ENCODE measurements at regions of chr4 and their contacts with region 1.

Region 1: DNA sequence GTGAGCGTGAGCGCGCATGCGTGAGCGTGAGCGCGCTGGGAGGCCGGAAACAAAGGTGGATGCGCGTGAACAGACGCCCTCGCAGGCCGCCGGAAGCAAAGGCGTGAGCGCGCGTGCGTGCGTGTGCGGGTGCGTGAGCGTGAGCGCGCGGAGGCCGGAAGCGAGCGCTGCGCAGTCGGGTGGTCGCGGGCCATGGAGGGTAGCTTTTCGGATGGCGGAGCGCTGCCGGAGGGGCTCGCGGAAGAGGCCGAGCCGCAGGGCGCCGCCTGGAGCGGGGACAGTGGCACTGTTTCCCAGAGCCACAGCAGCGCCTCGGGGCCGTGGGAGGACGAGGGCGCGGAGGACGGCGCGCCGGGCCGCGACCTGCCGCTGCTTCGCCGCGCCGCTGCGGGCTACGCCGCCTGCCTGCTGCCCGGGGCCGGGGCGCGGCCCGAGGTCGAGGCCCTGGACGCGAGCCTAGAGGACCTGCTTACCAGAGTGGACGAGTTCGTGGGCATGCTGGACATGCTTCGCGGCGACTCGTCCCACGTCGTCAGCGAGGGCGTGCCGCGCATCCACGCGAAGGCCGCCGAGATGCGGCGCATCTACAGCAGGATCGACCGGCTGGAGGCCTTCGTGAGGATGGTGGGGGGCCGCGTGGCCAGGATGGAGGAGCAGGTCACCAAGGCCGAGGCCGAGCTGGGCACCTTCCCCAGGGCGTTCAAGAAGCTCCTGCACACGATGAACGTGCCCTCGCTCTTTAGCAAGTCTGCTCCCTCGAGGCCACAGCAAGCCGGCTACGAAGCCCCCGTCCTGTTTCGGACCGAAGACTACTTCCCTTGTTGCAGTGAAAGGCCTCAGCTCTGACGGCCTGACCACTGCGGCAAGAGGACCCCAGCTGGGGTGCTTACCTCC is at the start of gene BLOC1S4:
- DNase-seq: peak; percentile 81
- ATAC-seq: peak; percentile 82
- H3K4me3 ChIP-seq: peak within 1 kb of the TSS; percentile 79 to 83
- H3K27ac ChIP-seq: peak within 1 kb of the TSS; percentile 93
- H3K4me1 ChIP-seq: peaks cover 4 to 20% of the 10 kb centered on the region in 2 experiments; a peak in 3 of 4 replicates
- H3K27me3 ChIP-seq: no peaks in the 10 kb centered on the region
- CTCF ChIP-seq: no peak
- POLR2A ChIP-seq: peak; percentile 32
- RAD21 ChIP-seq: no peak
- total RNA-seq, gene BLOC1S4: 15.7 TPM

Region 2: GRCh38 chr4:6427439-6428090 is 288.7 kb before region 1 on chr4:
- CTCF ChIA-PET with region 1: no interaction called
- POLR2A ChIA-PET with region 1: no interaction called
- RAD21 ChIA-PET with region 1: no interaction called
- intact Hi-C with region 1: no loop called
- DNase-seq: no peak
- ATAC-seq: peak; percentile 50; the same call in 1 of the 2 replicates
- H3K4me3 ChIP-seq: no peak overlapping the region
- H3K27ac ChIP-seq: no peak overlapping the region
- H3K4me1 ChIP-seq: no peaks in the 10 kb centered on the region
- H3K27me3 ChIP-seq: no peaks in the 10 kb centered on the region
- CTCF ChIP-seq: 0 out of 6 replicates have a peak, but pooled peaks of 1 of the 3 experiments have one; percentile 2
- POLR2A ChIP-seq: no peak
- RAD21 ChIP-seq: peak; percentile 47

Region 3: DNA sequence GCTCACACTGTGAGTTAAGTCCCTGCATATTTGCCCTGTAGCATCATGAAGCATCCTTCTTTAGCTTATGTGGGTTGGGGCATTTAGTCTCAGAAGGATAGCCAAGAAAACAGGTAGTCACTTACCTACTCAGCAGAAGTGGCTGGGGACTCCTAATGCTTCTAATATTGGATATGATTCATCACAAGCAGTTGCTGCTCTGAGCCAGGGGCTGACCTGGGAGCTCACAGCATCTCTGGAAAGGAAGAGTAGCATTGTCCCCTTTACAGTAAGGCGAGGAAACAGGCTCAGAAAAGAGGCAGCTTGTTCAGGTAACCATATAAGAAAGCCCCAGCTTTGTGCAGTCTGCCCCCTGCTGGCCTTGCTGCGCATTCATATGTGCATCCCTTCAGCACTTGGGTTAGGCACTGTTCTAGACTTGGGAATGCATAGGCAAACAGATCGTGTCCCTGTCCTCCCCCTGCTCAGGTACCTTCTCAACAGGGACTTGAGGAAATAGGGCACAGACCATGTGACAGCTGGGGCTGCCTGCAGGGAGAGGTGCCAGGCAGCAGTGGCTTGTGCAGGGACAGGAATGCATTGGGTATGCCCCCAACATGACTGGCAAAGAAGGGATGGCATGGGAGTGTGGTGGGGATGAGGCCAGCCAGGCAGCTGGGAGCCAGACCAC is 157.7 kb after region 1 on chr4:
- CTCF ChIA-PET with region 1: interaction called, 92 read pairs
- POLR2A ChIA-PET with region 1: no interaction called
- RAD21 ChIA-PET with region 1: interaction called, 11 to 15 read pairs
- intact Hi-C with region 1: loop called (anchors 1 kb)
- DNase-seq: peak; percentile 51
- ATAC-seq: peak; percentile 91
- H3K4me3 ChIP-seq: no peak overlapping the region
- H3K27ac ChIP-seq: no peak overlapping the region
- H3K4me1 ChIP-seq: no peaks in the 10 kb centered on the region
- H3K27me3 ChIP-seq: no peaks in the 10 kb centered on the region
- CTCF ChIP-seq: peak; percentile 78 to 92 (median 86)
- POLR2A ChIP-seq: no peak
- RAD21 ChIP-seq: peak; percentile 82

Region 4: DNA sequence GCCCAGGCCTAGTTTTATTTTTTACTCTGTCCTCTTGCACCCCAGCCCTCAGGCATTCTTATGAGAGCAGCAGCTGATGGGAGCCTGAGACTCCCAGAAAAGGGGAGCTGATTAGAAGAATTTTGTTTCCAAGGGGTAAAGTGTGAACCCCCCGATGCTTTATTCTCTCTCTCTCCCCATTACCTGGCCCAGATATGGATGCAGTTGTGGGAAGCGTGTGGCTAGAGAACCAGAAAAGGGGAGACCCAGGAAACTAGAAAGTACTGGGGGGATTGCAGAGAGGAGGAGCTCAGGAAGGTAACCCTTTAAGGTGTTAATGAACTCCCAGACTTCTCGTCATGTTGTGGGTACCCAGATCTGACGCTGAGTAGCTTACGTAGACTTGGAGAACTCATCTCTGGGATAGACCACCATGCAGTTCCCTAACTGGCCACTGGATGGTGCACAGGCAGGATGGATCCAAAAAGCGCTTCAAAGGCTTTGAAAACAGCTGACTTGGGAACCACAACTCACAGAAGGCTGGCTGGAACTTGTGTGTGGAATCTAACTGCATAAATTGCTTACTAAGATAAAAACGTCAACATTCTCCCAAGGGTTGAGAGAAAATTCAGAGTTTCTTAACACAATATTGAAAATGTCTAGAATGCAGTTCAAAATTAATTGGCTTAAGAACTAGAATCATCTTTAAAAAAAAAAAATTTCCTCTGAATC is 258.0 kb after region 1 on chr4:
- CTCF ChIA-PET with region 1: no interaction called
- POLR2A ChIA-PET with region 1: no interaction called
- RAD21 ChIA-PET with region 1: no interaction called
- intact Hi-C with region 1: loop called (anchors 10 kb)
- DNase-seq: peak; percentile 70
- ATAC-seq: peak; percentile 90
- H3K4me3 ChIP-seq: no peak overlapping the region
- H3K27ac ChIP-seq: no peak overlapping the region
- H3K4me1 ChIP-seq: peaks cover 3% of the 10 kb centered on the region in 2 experiments; a peak in 1 of 4 replicates
- H3K27me3 ChIP-seq: no peaks in the 10 kb centered on the region
- CTCF ChIP-seq: peak; percentile 75 to 98 (median 87)
- POLR2A ChIP-seq: no peak
- RAD21 ChIP-seq: peak; percentile 79

Region 5: GRCh38 chr4:7081891-7082471 is 365.7 kb after region 1 on chr4:
- CTCF ChIA-PET with region 1: interaction called, 13 read pairs
- POLR2A ChIA-PET with region 1: no interaction called
- RAD21 ChIA-PET with region 1: no interaction called
- intact Hi-C with region 1: no loop called
- DNase-seq: peak; percentile 74
- ATAC-seq: peak; percentile 100
- H3K4me3 ChIP-seq: no peak overlapping the region
- H3K27ac ChIP-seq: no peak overlapping the region
- H3K4me1 ChIP-seq: peaks cover 0 to 9% of the 10 kb centered on the region in 2 experiments; a peak in 2 of 4 replicates
- H3K27me3 ChIP-seq: peaks cover 15% of the 10 kb centered on the region; the same call in 1 of the 2 replicates
- CTCF ChIP-seq: peak; percentile 71 to 84 (median 80)
- POLR2A ChIP-seq: no peak
- RAD21 ChIP-seq: peak; percentile 93

Region 6: DNA sequence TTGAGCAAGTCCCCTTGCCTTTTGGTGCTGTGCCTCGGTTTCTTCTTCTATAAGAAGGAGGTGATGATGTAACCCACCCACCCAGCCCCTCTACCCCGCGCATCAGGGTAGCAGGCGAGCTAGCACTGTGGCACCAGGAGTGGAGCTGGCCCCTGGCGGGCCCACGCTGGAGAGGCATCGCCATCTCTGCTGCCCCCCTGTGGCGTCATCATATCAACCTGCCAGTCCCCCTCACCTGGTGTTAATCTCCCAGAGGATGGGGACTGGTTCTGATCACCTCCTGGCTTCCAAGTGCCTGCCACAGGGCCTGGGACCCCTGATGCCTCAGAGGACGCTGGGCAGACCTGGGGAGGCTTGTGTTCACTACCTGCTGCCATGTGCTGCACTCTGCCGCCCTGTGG is 469.8 kb after region 1 on chr4:
- CTCF ChIA-PET with region 1: no interaction called
- POLR2A ChIA-PET with region 1: no interaction called
- RAD21 ChIA-PET with region 1: no interaction called
- intact Hi-C with region 1: loop called (anchors 5 kb)
- DNase-seq: no peak
- ATAC-seq: peak; percentile 82
- H3K4me3 ChIP-seq: no peak overlapping the region
- H3K27ac ChIP-seq: no peak overlapping the region
- H3K4me1 ChIP-seq: no peaks in the 10 kb centered on the region
- H3K27me3 ChIP-seq: peaks cover 11% of the 10 kb centered on the region; the same call in 1 of the 2 replicates
- CTCF ChIP-seq: peak; percentile 27 to 40 (median 37); a peak in 4 of 6 replicates
- POLR2A ChIP-seq: no peak
- RAD21 ChIP-seq: peak; percentile 45